ENCODE measurements at regions of chr12 and their contacts with region 1.

Region 1: GRCh38 chr12:27243804-27244683 is at the start of gene STK38L:
- DNase-seq: peak; percentile 96 to 98
- H3K4me3 ChIP-seq: peak within 1 kb of the TSS; percentile 74 to 82
- H3K27ac ChIP-seq: peak within 1 kb of the TSS; percentile 95
- H3K4me1 ChIP-seq: peaks cover 27% of the 10 kb centered on the region
- H3K27me3 ChIP-seq: no peaks in the 10 kb centered on the region
- CTCF ChIP-seq: no peak
- POLR2A ChIP-seq: peak; percentile 32 to 92
- total RNA-seq, gene STK38L: 52.8 TPM

Region 2: GRCh38 chr12:27024291-27024690 is 219.8 kb before region 1 on chr12:
- intact Hi-C with region 1: loop called (anchors 10 kb)
- DNase-seq: no peak
- H3K4me3 ChIP-seq: peak overlapping the region in 1 of 2 donors; percentile 62
- H3K27ac ChIP-seq: no peak overlapping the region
- H3K4me1 ChIP-seq: peaks cover 28% of the 10 kb centered on the region
- H3K27me3 ChIP-seq: no peaks in the 10 kb centered on the region
- CTCF ChIP-seq: no peak
- POLR2A ChIP-seq: no peak

Region 3: DNA sequence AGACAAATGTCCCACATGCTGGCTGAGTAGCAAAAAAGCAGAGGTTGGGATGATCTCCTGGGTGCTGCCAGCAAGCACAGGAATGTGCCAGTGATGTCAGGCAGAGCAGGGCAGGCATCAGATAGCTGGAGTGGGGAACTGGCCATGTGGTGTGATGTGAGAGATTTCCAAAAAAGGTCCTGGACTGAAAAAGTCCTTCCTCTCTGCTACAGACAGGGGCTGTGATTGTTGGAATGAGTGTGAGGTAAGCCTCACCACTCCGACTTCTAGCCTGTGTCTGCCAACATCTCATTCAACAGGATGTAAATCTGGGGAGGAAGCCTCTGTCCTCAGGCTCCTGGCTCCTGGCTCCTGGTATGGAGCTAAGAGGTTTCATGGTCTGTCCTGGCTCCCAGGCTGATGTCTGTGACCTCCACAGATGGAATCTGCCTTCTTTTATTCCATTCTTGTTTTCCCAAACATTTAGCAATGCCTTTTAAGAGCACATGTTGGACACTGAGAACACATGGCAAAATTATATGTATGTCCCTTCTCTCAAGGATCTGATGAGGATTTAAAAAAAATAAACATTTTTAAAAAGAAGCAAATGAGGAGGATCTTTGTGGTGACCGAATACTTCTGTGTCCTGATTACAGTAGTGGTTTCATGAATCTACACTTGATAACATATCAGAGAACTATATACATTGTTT is 50.0 kb before region 1 on chr12:
- intact Hi-C with region 1: loop called (anchors 10 kb)
- DNase-seq: no peak
- H3K4me3 ChIP-seq: no peak overlapping the region
- H3K27ac ChIP-seq: peak overlapping the region; percentile 16
- H3K4me1 ChIP-seq: peaks cover 34% of the 10 kb centered on the region
- H3K27me3 ChIP-seq: no peaks in the 10 kb centered on the region
- CTCF ChIP-seq: no peak
- POLR2A ChIP-seq: no peak

Region 4: DNA sequence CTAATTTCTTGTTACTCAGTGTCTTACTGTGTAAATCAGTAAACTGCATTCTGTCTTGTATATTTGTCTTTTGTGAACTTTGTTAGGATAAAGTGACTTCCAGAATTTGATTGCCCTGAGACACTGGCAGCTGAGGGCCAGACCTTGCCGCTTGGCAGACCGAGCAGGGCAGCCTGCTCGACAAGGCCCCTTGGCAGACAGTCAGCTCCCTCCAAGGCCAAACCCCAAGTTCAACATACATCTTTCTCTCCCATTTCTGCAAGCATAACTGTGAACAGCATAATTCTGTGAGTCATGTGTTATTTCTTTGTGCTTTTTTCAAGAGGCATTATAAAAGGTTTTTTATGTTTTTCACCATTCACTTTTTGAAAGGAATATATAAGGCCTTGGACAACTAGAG is 49.4 kb after region 1 on chr12:
- intact Hi-C with region 1: loop called (anchors 10 kb)
- DNase-seq: no peak
- H3K4me3 ChIP-seq: no peak overlapping the region
- H3K27ac ChIP-seq: no peak overlapping the region
- H3K4me1 ChIP-seq: peaks cover 28% of the 10 kb centered on the region
- H3K27me3 ChIP-seq: no peaks in the 10 kb centered on the region
- CTCF ChIP-seq: no peak
- POLR2A ChIP-seq: no peak